Activated B cell treated with CpG ODN at 0.5 μM for 24 hours (primary cell): ENCODE measurements at regions of chr17 and their contacts with region 1.

Region 1: GRCh38 chr17:40909351-40909750 is 24.3 kb upstream of the KRT20 start:
- DNase-seq: no peak
- ATAC-seq: peak; percentile 77
- H3K4me3 Mint-ChIP-seq: no peak overlapping the region
- H3K27ac Mint-ChIP-seq: no peak overlapping the region
- H3K4me1 Mint-ChIP-seq: no peaks in the 10 kb centered on the region
- H3K27me3 Mint-ChIP-seq: peaks cover 34% of the 10 kb centered on the region
- CTCF ChIP-seq: no peak

Region 2: DNA sequence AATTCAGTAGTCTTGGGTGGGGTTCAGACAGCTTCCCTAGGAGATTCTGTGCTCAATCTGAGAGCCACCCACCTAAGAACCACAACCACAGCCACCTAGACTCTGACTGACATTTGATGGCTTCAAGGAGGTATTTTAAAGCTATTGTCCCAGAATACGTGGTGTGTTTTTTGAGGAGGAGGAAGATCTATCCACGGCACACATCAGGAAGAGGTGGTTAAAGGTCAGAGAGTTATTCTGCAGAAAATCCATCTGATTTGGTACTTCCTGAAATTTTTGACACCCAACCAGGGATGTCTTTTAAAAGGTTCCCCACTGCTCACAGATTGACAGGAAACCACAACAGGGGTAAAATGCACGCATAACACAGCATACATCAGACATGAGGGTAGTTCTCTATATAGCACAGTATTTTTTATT is 286.8 kb before region 1 on chr17:
- CTCF ChIA-PET with region 1: interaction called, 4 read pairs
- POLR2A ChIA-PET with region 1: no interaction called
- intact Hi-C with region 1: loop called (anchors 10 kb)
- DNase-seq: no peak
- ATAC-seq: no peak
- H3K4me3 Mint-ChIP-seq: peak overlapping the region; percentile 53
- H3K27ac Mint-ChIP-seq: peak overlapping the region; percentile 67
- H3K4me1 Mint-ChIP-seq: peaks cover 71% of the 10 kb centered on the region
- H3K27me3 Mint-ChIP-seq: no peaks in the 10 kb centered on the region
- CTCF ChIP-seq: no peak

Region 3: DNA sequence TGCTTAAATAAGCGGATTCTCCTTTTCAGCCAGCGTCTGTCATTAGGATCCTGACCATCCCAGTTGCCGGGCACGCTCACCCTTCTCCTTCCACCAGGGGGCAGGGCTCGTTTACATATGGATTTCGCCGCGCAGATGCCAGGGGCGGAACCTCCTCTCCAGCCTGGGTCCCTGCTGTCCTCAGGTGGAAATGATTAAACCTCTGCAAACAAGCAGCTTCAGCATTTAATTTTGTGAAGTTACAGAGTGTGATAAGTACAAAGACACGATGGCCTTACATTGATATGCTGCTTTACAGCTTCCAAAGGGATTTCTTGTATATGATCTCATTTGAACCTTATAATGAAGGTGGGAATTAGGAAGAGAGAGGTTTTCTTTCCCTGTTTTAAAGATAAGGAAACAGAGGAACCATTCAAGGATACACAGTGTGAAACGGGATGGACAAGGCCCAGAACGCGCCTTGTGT is 105.7 kb before region 1 on chr17:
- CTCF ChIA-PET with region 1: no interaction called
- POLR2A ChIA-PET with region 1: no interaction called
- intact Hi-C with region 1: loop called (anchors 5 kb)
- DNase-seq: peak; percentile 54
- ATAC-seq: peak; percentile 94
- H3K4me3 Mint-ChIP-seq: no peak overlapping the region
- H3K27ac Mint-ChIP-seq: no peak overlapping the region
- H3K4me1 Mint-ChIP-seq: peaks cover 3% of the 10 kb centered on the region
- H3K27me3 Mint-ChIP-seq: peaks cover 51% of the 10 kb centered on the region
- CTCF ChIP-seq: peak; percentile 44

Region 4: GRCh38 chr17:41322094-41322902 is 412.9 kb after region 1 on chr17:
- CTCF ChIA-PET with region 1: interaction called, 13 read pairs
- POLR2A ChIA-PET with region 1: no interaction called
- intact Hi-C with region 1: loop called (anchors 1 kb)
- DNase-seq: no peak
- ATAC-seq: peak; percentile 67
- H3K4me3 Mint-ChIP-seq: no peak overlapping the region
- H3K27ac Mint-ChIP-seq: no peak overlapping the region
- H3K4me1 Mint-ChIP-seq: no peaks in the 10 kb centered on the region
- H3K27me3 Mint-ChIP-seq: no peaks in the 10 kb centered on the region
- CTCF ChIP-seq: no peak

Region 5: GRCh38 chr17:41329281-41329948 is 420.1 kb after region 1 on chr17:
- CTCF ChIA-PET with region 1: interaction called, 3 read pairs
- POLR2A ChIA-PET with region 1: no interaction called
- intact Hi-C with region 1: loop called (anchors 1 kb)
- DNase-seq: no peak
- ATAC-seq: peak; percentile 47
- H3K4me3 Mint-ChIP-seq: no peak overlapping the region
- H3K27ac Mint-ChIP-seq: no peak overlapping the region
- H3K4me1 Mint-ChIP-seq: peaks cover 6% of the 10 kb centered on the region
- H3K27me3 Mint-ChIP-seq: no peaks in the 10 kb centered on the region
- CTCF ChIP-seq: no peak

Region 6: GRCh38 chr17:41548844-41549595 is 639.7 kb after region 1 on chr17:
- CTCF ChIA-PET with region 1: interaction called, 23 read pairs
- POLR2A ChIA-PET with region 1: no interaction called
- intact Hi-C with region 1: loop called (anchors 1 kb)
- DNase-seq: peak; percentile 50
- ATAC-seq: peak; percentile 87
- H3K4me3 Mint-ChIP-seq: peak overlapping the region; percentile 44
- H3K27ac Mint-ChIP-seq: no peak overlapping the region
- H3K4me1 Mint-ChIP-seq: peaks cover 8% of the 10 kb centered on the region
- H3K27me3 Mint-ChIP-seq: peaks cover 39% of the 10 kb centered on the region
- CTCF ChIP-seq: no peak

Region 7: DNA sequence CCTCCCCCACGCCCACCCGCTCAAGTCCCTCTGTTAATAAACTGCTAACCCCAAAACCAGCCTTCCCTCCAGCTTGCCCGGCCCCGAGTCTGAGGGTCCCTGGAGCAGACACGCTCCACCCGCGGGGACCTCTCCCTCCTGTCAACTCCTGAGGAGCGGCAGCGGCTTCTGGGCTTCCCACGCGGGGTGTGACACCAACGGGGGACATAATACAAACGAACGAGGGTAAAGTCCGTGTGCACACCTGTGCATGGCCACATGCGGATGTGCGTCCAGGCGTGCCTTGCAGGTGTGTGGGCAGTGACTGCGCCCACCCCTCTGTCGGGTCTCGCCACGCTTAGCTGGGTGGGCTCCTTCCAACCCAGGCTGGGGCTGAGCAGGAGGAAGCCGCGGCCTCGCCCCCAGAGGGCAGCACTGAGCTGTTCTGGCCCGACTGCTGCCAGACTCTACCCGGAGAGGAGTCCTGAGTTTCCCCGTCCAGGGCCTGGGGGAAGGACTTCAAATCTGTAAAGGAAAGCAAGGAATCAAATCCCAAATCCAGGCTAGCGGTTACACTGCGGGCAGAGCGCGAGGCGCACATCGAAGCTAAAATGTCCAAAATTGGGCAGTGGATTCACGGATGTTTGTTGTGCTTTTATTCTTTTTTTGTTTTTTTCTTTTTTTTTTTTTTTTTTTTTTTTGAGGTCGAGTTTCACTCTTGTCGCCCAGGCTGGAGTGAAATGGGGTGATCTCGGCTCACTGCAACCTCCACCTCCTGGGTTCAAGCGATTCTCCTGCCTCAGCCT is 739.3 kb after region 1 on chr17:
- CTCF ChIA-PET with region 1: interaction called, 19 read pairs
- POLR2A ChIA-PET with region 1: interaction called, 5 read pairs
- intact Hi-C with region 1: loop called (anchors 1 kb)
- DNase-seq: peak; percentile 85
- ATAC-seq: peak; percentile 91
- H3K4me3 Mint-ChIP-seq: peak overlapping the region; percentile 79
- H3K27ac Mint-ChIP-seq: peak overlapping the region; percentile 54
- H3K4me1 Mint-ChIP-seq: peaks cover 10% of the 10 kb centered on the region
- H3K27me3 Mint-ChIP-seq: no peaks in the 10 kb centered on the region
- CTCF ChIP-seq: peak; percentile 88